IMR-90 (cell line): ENCODE measurements at regions of chr9 and their contacts with region 1.

Region 1: DNA sequence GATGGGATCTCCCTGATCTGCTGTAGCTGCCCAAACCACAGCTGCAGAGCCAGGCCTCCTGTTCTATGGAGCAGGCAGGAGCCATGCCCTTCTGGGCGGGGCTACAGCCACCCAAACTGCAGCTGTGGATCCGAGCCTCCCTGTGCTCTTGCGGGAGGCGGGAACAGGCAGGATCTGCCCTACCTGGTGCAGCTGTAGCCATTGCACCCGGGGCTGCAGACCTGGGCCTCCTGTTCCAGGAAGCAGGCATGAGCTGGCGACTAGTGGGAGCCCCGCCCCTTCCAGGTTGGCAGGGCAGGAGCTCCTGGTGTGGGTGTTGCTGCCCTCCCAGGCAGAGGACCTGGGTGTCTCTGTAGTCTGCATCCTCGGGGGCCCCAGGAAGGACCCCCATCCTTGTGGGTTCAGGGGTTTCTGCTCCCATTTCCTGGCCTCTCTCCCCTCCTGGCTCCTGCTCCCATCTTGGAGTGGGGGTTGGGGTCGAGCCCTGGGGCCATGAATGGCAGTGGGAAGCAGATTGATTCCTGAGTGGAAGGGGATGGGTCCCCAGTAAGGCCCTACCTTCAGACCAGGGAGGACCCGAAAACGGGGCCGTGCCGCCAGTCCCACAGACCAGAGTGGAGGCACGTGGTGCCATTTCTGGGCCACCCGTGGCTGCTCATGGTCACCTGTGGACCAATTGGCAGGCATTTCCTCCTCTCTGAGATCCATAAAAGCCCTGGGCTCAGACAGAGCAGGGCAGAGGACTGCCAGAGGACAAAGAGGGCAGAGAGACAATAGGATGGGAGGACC is 22.9 kb upstream of the UNC13B start:
- DNase-seq: no peak
- ATAC-seq: no peak
- H3K4me3 ChIP-seq: no peak overlapping the region
- H3K27ac ChIP-seq: no peak overlapping the region
- H3K4me1 ChIP-seq: no peaks in the 10 kb centered on the region
- H3K27me3 ChIP-seq: peaks cover 2% of the 10 kb centered on the region; the same call in 1 of the 2 replicates
- CTCF ChIP-seq: no peak
- POLR2A ChIP-seq: no peak
- RAD21 ChIP-seq: no peak

Region 2: GRCh38 chr9:35001803-35002502 is 136.9 kb before region 1 on chr9:
- CTCF ChIA-PET with region 1: no interaction called
- POLR2A ChIA-PET with region 1: no interaction called
- dilution Hi-C with region 1: no loop called
- in situ Hi-C with region 1: no loop called
- intact Hi-C with region 1: no loop called
- DNase-seq: peak; percentile 50
- ATAC-seq: no peak
- H3K4me3 ChIP-seq: no peak overlapping the region
- H3K27ac ChIP-seq: no peak overlapping the region
- H3K4me1 ChIP-seq: peaks cover 7% of the 10 kb centered on the region
- H3K27me3 ChIP-seq: no peaks in the 10 kb centered on the region
- CTCF ChIP-seq: no peak
- POLR2A ChIP-seq: no peak
- RAD21 ChIP-seq: no peak

Region 3: DNA sequence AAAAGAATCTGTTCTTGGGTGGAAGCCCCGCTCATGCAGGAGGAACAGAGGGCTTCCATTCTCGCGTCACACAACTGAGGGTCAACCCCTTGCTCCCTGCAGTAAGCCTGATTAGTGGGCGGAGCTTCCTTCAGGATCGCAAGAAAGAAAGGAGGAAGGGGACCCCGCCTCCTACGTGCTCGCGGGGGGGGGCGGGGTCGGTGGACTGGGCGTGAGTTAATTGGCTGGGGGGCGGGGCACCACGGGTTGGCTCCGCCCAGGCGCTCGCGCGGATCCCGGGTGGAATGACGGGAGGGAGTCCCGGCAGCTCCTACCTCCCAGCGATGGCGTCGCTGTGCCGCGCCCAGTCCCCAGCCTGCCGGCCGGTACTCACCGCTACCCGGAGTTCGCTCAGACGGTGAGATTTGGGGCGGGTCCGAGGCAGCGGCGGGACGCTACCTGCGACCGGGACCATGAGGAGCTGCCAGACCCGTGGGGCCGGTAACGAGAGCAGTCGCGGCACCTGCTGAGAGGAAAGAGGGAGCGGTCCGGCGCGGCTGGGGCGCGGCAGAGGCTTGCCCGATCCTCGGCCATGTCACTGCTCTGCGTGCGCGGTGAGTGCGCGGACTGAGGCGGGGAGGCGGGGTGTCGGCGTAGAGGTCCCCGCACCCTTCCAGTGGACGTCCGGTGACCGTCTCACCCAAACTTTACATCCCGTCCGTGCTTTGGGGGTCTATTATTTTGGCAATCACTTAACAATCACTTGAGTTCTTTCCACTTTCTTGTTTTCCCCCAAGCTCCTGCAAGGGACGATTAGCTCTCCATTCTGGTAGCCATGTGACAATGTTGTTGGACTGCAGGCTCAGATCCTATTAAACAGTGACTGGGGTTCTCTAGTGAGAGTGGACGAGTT is 23.1 kb after region 1 on chr9 and contains the start of gene UNC13B:
- CTCF ChIA-PET with region 1: no interaction called
- POLR2A ChIA-PET with region 1: interaction called, 19 read pairs
- dilution Hi-C with region 1: no loop called
- in situ Hi-C with region 1: no loop called
- intact Hi-C with region 1: no loop called
- DNase-seq: peak; percentile 83
- ATAC-seq: peak; percentile 99
- H3K4me3 ChIP-seq: peak within 1 kb of the TSS; percentile 77
- H3K27ac ChIP-seq: peak within 1 kb of the TSS; percentile 52
- H3K4me1 ChIP-seq: no peaks in the 10 kb centered on the region
- H3K27me3 ChIP-seq: no peaks in the 10 kb centered on the region
- CTCF ChIP-seq: 0 out of 2 replicates have a peak, but pooled peaks have one; percentile 8
- POLR2A ChIP-seq: peak; percentile 45; the same call in 1 of the 2 replicates
- RAD21 ChIP-seq: no peak
- total RNA-seq, gene UNC13B: 12.2 and 14.3 TPM in 2 replicates